ENCODE measurements at regions of chr22 and their contacts with region 1.

Region 1: DNA sequence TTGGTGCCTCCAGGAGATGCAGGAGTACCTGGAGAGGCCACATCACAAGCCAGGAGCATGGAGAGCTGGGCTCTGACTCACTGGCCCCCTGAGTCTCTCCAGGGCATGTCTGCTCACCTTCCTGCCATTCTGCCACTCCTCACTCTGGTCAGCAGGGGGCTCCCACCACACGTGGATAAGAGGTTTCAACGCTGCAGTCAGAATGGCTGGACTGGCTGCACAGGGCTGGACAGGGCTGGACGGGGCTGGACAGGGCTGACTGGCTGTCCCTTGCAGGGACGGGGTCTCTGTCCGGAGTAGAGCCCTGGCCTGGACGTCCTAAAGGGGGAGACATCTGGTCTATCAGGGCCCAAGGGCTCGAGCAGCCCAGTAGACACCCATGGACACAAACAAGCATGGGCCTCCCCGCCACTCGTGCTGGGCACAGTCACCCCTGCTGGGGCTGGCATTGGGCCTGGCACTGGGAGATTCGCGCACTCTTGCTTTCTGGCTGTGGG is 34.6 kb downstream of the CYTH4 start:
- DNase-seq: peak; percentile 90
- ATAC-seq: peak; percentile 84
- H3K4me3 ChIP-seq: no peak overlapping the region
- H3K27ac ChIP-seq: peak overlapping the region; percentile 100
- H3K4me1 ChIP-seq: peaks cover 60 to 81% of the 10 kb centered on the region in 2 experiments
- H3K27me3 ChIP-seq: no peaks in the 10 kb centered on the region
- CTCF ChIP-seq: peak in 2 of 3 experiments; percentile 99; a peak in 4 of 6 replicates
- POLR2A ChIP-seq: no peak
- RAD21 ChIP-seq: no peak

Region 2: GRCh38 chr22:37267135-37267587 is 49.8 kb before region 1 on chr22:
- CTCF ChIA-PET with region 1: interaction called, 10 read pairs
- POLR2A ChIA-PET with region 1: no interaction called
- RAD21 ChIA-PET with region 1: interaction called in 1 of 2 experiments, 3 read pairs
- intact Hi-C with region 1: no loop called
- DNase-seq: no peak
- ATAC-seq: peak; percentile 88
- H3K4me3 ChIP-seq: peak overlapping the region; percentile 32 to 51
- H3K27ac ChIP-seq: no peak overlapping the region; the same call in 1 of the 2 replicates
- H3K4me1 ChIP-seq: peaks cover 8 to 30% of the 10 kb centered on the region in 2 experiments
- H3K27me3 ChIP-seq: no peaks in the 10 kb centered on the region
- CTCF ChIP-seq: peak; percentile 60 to 90 (median 76); a peak in 5 of 6 replicates
- POLR2A ChIP-seq: no peak
- RAD21 ChIP-seq: peak; percentile 78

Region 3: DNA sequence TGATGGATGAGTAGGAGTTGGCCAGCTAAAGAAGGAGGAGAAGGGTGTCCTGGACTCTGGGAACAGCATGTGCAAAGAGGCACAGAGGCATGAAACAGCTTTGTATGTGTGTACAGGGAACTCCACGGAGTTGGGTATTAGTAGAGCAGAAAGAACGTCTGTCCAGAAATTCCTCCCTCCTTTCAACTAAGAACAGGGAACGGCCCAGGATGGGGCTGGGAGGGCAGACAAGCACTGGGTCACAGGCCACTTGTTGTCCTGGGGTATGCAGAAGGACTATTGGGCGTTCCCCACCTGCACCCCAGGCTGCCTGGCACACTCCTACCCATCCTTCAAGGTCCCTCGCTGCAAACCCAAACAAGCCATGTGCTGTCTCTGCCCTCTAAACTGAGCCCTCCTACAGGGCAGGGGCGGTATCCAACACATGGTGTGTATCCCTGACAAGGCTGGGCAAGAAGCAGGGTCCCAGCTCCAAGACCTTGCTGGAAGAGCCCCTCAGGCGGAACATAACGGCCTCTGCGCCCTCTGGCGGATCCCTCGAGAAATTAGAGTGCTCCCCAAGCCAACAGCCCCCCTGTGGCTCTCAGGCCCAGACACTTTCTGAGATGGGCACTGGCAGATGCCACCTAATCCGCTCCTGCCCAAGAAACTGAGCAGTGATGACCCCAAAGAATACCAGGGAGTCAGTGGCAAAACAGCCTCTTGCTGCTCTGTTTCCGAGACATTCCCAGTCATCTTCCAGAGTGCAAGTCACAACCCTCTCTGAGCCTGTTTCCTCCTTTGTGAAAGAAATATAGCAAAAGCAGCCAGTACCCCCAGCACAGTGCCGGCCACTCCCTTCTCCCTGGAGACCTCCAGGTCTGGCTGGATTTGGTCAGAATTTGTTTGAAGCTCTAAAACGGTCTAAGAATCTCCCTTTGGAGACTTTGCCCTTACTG is 112.0 kb after region 1 on chr22:
- CTCF ChIA-PET with region 1: interaction called, 47 read pairs
- POLR2A ChIA-PET with region 1: no interaction called
- RAD21 ChIA-PET with region 1: interaction called, 5 to 6 read pairs
- intact Hi-C with region 1: loop called (anchors 1 kb)
- DNase-seq: peak; percentile 37
- ATAC-seq: peak; percentile 31
- H3K4me3 ChIP-seq: peak overlapping the region; percentile 70 to 87; a peak in 3 of 4 replicates
- H3K27ac ChIP-seq: peak overlapping the region; percentile 95
- H3K4me1 ChIP-seq: peaks cover 54 to 91% of the 10 kb centered on the region in 2 experiments
- H3K27me3 ChIP-seq: no peaks in the 10 kb centered on the region
- CTCF ChIP-seq: peak in 2 of 3 experiments; percentile 82 to 88; a peak in 4 of 6 replicates
- POLR2A ChIP-seq: no peak
- RAD21 ChIP-seq: no peak

Region 4: DNA sequence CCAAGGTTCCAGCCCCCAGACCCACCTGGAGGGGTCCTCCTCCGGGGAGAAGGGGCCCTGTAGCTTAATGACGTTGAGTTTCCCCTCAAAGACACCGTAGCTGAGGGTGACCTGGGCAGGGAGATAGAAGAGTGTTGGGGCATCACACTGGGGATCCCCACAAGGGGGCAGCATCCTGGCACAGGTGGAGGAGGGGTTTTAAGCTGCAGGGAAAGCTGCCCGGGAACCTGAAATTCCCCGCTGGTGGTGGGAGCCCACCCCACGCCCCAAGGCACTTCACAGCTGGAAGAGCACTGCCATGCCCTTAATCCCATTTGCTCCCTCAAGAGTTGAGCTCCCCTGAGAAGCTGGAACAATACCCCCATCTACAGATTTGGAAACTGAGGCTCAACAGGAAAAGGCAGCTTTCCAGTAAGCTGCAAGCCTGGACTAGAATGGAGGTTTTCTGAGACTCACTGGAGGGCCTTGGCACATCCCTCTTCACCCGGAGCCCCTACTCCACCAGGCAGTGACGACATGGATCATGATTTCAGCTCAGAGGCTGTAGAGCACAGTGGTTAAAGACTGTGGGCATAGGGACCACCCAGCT is 155.6 kb after region 1 on chr22:
- CTCF ChIA-PET with region 1: interaction called, 16 read pairs
- POLR2A ChIA-PET with region 1: no interaction called
- RAD21 ChIA-PET with region 1: interaction called, 3 to 4 read pairs
- intact Hi-C with region 1: no loop called
- DNase-seq: no peak
- ATAC-seq: peak; percentile 85
- H3K4me3 ChIP-seq: no peak overlapping the region
- H3K27ac ChIP-seq: no peak overlapping the region
- H3K4me1 ChIP-seq: peaks cover 6 to 37% of the 10 kb centered on the region in 2 experiments
- H3K27me3 ChIP-seq: no peaks in the 10 kb centered on the region
- CTCF ChIP-seq: peak; percentile 70 to 91 (median 90)
- POLR2A ChIP-seq: no peak
- RAD21 ChIP-seq: peak; percentile 78

Region 5: DNA sequence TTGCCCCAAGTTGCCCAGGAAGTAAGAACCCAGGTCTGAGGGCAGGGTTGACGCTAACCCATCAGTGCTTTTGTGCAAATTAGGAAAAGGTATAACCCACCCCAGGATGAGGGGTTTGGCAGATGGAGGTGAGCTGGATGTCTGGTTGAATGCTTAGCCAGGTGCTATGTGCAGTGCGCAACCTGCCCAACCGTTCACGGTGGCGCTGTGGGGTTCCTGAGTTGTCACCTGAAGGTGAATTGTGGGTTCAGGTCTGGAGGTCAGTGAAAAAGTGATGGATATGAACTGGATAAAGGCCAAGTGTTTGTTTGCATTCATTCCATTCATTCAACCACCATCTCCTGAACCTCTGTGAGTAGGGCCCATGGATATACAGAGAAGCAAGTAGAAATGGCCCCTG is 277.3 kb after region 1 on chr22:
- CTCF ChIA-PET with region 1: interaction called, 13 read pairs
- POLR2A ChIA-PET with region 1: no interaction called
- RAD21 ChIA-PET with region 1: no interaction called
- intact Hi-C with region 1: no loop called
- DNase-seq: no peak
- ATAC-seq: peak; percentile 70
- H3K4me3 ChIP-seq: no peak overlapping the region
- H3K27ac ChIP-seq: no peak overlapping the region
- H3K4me1 ChIP-seq: peaks cover 4 to 22% of the 10 kb centered on the region in 2 experiments; a peak in 3 of 4 replicates
- H3K27me3 ChIP-seq: no peaks in the 10 kb centered on the region
- CTCF ChIP-seq: peak; percentile 35 to 68 (median 63); a peak in 5 of 6 replicates
- POLR2A ChIP-seq: no peak
- RAD21 ChIP-seq: peak; percentile 34; the same call in 1 of the 2 replicates

Measured in HCT116 (cell line).